MCF 10A (cell line): ENCODE measurements at regions of chr9 and their contacts with region 1.

Region 1: DNA sequence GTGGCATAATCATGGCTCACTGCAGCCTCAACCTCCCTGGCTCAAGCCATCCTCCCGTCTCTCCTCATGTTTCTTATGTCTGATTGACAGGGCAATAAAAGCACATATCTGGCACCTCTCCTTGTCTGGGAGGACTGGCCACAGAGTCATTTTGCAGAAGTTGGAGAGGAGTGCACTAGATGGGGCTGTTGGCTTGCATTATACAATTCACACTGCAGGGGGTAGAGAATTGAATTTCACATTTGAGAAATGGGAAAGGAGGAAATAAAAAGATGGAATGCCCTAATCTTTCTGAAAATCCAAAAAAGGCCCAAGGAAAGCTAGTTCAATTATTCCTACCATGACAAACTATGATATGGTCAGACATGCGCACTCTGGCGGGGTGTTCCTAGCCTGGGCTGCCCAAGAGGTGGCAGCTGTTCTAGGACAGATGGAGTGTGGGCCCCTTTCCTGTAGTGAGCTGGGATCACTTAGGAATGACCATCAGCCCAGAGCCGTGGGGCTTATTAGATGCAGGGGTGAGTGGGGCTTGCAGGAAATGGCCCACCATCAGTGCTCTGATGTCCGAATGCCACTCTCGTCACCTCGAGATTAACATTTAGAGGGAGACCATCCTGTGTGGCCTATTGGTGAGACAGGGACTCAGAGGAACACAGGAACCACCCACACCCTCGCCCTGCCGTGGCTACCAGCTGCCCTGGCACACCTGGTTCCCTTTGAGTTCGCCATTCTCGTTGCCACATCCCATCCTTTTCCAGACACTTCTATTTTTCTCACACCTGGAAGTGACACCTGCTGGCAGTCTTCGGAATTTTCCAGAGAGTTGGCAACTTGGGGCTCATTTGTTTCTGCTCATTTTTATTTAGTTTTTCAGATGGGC is 21.8 kb upstream of the ANKRD18A start:
- DNase-seq: peak; percentile 76
- H3K4me3 Mint-ChIP-seq: no peak overlapping the region
- H3K27ac Mint-ChIP-seq: no peak overlapping the region
- H3K4me1 Mint-ChIP-seq: peaks cover 6% of the 10 kb centered on the region
- H3K27me3 Mint-ChIP-seq: no peaks in the 10 kb centered on the region
- CTCF ChIP-seq: peak; percentile 70

Region 2: DNA sequence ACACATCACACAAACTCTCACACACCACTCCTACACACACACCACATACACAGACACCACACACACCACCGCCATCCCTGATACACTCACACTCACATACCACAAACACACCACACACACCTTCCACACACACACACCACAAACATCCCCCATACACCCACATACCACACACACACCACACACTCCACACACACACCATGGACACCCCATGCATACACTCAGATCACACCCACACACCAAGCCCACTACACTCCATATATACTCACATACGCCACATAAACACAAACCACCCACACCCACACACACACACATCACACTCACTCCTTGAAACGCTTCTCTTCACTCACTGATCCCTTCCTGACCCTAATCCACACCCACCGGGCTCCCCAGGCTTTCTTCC is 12.7 kb before region 1 on chr9:
- CTCF ChIA-PET with region 1: interaction called, 17 read pairs
- POLR2A ChIA-PET with region 1: no interaction called
- intact Hi-C with region 1: no loop called
- DNase-seq: no peak
- H3K4me3 Mint-ChIP-seq: no peak overlapping the region
- H3K27ac Mint-ChIP-seq: no peak overlapping the region
- H3K4me1 Mint-ChIP-seq: peaks cover 5% of the 10 kb centered on the region
- H3K27me3 Mint-ChIP-seq: no peaks in the 10 kb centered on the region
- CTCF ChIP-seq: no peak